Common myeloid progenitor, CD34-positive (primary cell): ENCODE measurements at regions of chr20 and their contacts with region 1.

Region 1: DNA sequence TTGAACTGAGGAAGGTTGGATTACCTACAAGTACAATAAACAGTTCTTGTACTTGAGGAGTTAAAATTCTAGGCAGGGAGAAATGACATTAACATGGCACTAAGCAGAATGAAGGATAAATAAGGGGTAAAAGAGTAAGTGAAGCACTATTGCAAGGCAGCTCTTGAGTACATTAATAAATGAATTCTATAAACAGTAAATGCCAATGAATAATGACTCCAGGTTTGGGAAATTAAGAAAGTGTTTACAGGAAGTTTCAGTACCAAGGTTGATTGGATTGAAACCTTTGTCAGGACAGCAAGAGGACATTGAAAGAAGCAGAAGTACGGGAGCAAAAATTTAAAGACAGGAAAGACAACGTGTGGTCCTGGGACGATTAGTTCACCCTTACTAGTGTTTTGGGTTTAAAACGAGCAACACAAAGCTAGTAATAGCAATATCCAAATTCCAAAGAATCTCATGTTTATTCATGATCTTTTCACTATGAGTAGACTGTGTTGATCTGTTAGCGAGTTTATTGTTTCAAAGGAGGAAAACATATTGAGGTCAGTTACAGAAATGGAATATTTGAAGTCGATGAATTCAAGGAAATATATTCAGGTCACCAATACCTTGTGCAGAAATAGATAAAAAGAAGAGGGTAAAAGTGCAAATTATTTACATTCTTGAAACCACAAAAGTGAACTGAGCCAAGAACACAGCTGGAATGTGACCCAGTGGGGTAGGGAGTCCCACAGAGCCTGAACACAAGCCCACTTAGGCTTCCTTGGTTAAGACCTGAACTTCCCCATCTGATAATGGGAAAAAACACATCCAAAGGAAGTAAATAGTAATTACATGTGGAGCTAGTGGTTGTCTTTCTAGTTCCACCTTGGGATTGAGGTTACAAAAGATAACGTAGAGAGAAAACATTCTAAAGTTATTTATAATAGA is 80.8 kb downstream of the MKKS start:
- DNase-seq: peak in 1 of 3 donors; percentile 8
- H3K4me3 ChIP-seq: no peak overlapping the region
- H3K27ac ChIP-seq: no peak overlapping the region
- H3K4me1 ChIP-seq: peaks cover 0 to 12% (median 5%) of the 10 kb centered on the region in 4 experiments
- H3K27me3 ChIP-seq: no peaks in the 10 kb centered on the region

Region 2: DNA sequence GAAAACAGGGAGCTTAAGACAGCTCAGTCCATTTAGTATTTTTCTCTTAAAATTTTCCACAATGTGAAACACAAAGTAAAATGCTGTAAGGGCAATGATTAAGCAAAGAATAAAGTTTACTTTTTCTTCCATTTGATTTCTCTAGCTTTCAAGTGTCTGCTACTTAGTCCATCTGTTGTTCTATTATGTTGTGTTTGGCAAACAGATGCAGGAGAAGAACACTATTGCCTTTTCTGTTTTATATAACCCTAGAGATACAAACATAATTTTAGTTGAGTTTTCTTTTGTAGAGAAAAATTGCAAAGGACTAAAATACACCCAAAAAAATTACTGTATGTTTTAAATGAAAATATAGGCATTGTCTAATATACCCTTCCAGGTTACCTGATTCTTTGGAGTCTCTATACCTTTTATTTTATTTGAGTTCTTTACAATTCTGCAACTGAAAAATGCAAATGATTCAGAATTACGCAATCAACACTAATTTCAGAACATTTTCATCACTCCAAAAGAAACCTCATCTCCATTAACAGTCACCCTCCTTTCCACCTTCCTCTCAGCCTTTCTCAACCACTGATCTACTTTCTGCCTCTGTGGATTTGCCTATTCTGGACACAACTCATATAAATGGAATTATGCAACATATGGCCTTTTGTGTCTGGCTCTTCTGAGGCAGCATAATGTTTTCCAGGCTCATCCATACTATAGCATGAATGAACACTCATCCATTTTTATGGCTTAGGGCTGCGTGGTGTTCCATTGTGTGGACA is 16.1 kb before region 1 on chr20:
- CTCF ChIA-PET with region 1: no interaction called
- POLR2A ChIA-PET with region 1: interaction called, 11 read pairs
- DNase-seq: no peak
- H3K4me3 ChIP-seq: no peak overlapping the region
- H3K27ac ChIP-seq: no peak overlapping the region
- H3K4me1 ChIP-seq: no peaks in the 10 kb centered on the region
- H3K27me3 ChIP-seq: no peaks in the 10 kb centered on the region

Region 3: DNA sequence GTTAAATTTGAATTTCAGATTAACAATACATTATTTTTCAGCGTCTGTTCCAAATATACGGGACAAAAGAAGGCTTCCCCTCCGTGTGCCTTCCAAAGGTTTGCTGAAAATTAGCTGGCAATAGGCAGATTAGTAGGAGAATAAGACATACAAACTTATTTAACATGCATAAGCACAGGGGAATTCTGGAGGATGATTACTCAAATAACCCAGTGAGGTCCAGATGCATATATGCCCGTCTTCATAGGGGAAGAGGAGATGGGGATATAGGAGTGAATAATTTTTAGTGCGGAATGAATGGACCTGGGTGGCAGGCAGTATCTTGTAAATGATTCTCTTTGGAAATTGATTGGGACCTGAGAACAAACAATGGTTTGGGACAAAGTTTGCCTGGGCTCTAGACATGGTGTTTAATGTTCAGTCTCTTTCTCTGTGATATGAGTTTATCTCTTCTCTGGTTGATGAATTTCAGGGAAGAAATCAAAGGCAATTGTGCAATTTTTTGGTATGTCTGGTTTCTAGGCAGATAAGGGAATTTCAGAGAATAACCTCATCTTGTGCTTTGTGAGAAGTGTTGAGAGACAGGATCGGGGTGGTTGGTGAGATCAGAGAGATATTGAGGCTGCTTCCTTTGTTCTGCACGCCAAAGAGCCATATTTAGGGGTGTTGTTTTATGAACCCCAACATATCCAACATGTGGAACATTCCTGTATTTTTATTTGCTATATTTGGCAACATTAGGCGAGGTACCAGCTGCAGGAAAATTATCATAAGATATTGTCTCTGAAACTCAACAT is 17.1 kb after region 1 on chr20:
- CTCF ChIA-PET with region 1: no interaction called
- POLR2A ChIA-PET with region 1: no interaction called
- DNase-seq: no peak
- H3K4me3 ChIP-seq: no peak overlapping the region
- H3K27ac ChIP-seq: no peak overlapping the region
- H3K4me1 ChIP-seq: no peaks in the 10 kb centered on the region
- H3K27me3 ChIP-seq: peaks cover 0 to 1% (median 0%) of the 10 kb centered on the region in 5 experiments

Region 4: DNA sequence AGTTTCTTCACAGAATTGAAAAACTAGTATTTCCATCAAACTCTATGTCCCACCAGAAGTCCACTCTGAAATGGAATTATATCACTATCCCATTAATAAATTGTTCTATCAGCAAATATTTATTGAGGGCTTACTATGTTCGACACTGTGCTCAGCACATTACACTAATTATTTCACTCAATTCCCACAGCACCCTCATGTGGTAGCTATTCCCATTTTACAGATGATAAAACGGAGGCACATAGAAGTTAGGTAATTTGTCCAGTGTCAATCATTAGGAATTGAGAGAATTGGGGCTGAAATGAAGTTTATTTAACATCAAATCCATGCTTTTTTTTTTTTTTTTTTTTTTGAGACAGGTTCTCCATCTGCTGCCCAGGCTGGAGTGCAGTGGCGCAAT is 28.3 kb after region 1 on chr20:
- CTCF ChIA-PET with region 1: no interaction called
- POLR2A ChIA-PET with region 1: no interaction called
- DNase-seq: no peak
- H3K4me3 ChIP-seq: no peak overlapping the region
- H3K27ac ChIP-seq: no peak overlapping the region
- H3K4me1 ChIP-seq: no peaks in the 10 kb centered on the region
- H3K27me3 ChIP-seq: no peaks in the 10 kb centered on the region

Region 5: DNA sequence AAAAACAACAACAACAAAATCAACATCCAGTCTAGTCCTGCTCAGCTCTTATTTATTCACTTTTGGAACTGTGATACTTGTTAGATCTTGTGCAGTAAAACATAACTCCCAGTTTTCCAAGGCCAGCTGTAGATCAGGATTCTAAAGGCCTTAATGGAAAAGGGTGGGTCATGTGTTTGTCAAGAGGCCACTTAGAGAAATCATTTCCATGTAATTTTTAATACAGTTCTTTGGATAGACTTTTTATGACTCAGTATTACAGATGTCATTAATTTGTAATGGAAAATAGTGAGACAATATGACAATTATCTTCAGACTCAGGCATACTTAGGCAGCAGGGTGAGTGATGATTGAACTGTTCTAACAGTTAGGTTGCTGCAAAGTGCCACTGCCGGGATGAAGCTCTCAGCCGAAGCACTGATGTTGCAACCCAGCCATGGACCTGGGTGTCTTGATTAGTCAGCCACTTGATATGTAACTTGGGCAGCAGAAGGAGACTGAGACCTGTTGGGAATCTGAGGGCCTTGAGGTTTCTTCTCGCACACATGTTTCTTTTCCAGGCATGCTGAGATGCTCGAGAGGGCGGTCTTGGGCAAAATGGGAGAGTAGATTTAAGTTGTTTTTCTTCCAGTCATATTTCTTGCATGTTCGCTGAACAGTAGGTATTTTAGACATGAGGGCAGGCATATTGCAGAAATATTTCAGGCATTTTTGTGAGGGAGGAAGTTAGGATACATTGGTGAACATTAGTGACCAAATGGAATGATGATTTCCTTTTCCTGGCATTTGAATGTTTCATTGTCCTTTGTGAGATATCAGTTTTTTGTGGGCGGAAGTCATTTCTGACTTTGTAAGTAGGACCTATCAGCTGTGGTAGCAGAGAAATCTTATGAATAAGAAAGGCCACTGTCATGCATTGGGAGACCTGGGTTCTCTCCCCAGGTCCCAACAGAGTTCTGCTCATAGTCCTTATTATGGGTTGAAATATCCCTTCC is 134.2 kb after region 1 on chr20:
- CTCF ChIA-PET with region 1: no interaction called
- POLR2A ChIA-PET with region 1: no interaction called
- DNase-seq: no peak
- H3K4me3 ChIP-seq: no peak overlapping the region
- H3K27ac ChIP-seq: no peak overlapping the region
- H3K4me1 ChIP-seq: peaks cover 9 to 73% (median 23%) of the 10 kb centered on the region in 4 experiments
- H3K27me3 ChIP-seq: no peaks in the 10 kb centered on the region